Transverse colon (tissue), 4 donors: ENCODE measurements at regions of chr15 and their contacts with region 1.

Region 1: GRCh38 chr15:31311735-31312619 is 14.7 kb upstream of the KLF13 start:
- DNase-seq: no peak
- H3K4me3 ChIP-seq: no peak overlapping the region
- H3K27ac ChIP-seq: no peak overlapping the region
- H3K4me1 ChIP-seq: no peaks in the 10 kb centered on the region
- H3K27me3 ChIP-seq: peaks cover 4% of the 10 kb centered on the region
- CTCF ChIP-seq: no peak
- EP300 ChIP-seq: no peak
- POLR2A ChIP-seq: no peak

Region 2: GRCh38 chr15:31200735-31201151 is 111.2 kb before region 1 on chr15:
- in situ Hi-C with region 1: loop called in 2 of 4 experiments (anchors 10 to 25 kb)
- intact Hi-C with region 1: no loop called
- DNase-seq: peak; percentile 72
- H3K4me3 ChIP-seq: no peak overlapping the region
- H3K27ac ChIP-seq: no peak overlapping the region
- H3K4me1 ChIP-seq: peaks cover 0 to 7% (median 0%) of the 10 kb centered on the region in 4 donors
- H3K27me3 ChIP-seq: no peaks in the 10 kb centered on the region
- CTCF ChIP-seq: peak; percentile 28 to 70 (median 48)
- EP300 ChIP-seq: no peak
- POLR2A ChIP-seq: no peak

Region 3: GRCh38 chr15:31251165-31251564 is 60.8 kb before region 1 on chr15:
- in situ Hi-C with region 1: no loop called
- intact Hi-C with region 1: loop called (anchors 2 kb)
- DNase-seq: no peak
- H3K4me3 ChIP-seq: no peak overlapping the region
- H3K27ac ChIP-seq: no peak overlapping the region
- H3K4me1 ChIP-seq: peaks cover 4 to 26% (median 17%) of the 10 kb centered on the region in 4 donors
- H3K27me3 ChIP-seq: no peaks in the 10 kb centered on the region
- CTCF ChIP-seq: no peak
- EP300 ChIP-seq: no peak
- POLR2A ChIP-seq: no peak

Region 4: DNA sequence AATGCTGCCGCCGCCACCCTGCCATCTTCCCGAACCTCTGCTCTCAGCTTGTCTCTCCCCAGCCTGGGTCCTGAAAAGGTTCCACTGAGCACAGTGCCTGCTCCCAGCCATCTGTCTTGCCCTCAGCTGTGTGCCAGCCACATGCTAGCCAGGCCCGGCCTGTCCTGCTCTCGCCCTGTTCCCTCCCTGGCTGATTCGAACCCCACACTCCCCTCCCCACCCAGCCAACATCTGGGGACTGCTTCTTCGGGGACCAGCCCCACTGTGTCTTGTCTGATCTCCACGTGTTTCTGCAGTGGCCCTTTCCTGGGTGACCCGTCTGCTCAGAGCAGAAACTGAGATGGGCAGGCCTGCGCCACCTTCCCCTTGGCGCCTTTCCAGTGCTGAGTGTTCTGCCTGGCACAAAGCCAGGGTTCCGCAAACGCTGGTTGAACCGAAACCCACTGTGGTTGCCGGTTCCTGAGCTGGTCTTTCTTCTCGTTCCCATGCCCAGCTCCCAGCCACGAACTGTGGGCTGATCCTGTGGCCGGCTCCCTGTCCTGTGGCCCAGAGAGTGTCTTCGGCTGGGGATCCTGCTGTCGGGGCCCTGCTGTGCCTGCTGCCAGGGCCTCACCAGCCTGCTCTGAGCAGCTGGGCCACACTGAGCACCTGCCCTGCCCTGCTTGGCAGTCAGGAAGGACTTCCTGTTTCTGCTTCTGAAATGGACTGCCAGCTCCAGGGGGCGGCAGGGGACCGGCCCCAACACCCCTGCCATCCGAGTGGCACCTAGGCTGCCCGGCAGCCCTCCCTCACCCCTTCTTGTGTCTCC is 48.0 kb before region 1 on chr15:
- in situ Hi-C with region 1: no loop called
- intact Hi-C with region 1: no loop called
- DNase-seq: peak; percentile 91
- H3K4me3 ChIP-seq: no peak overlapping the region
- H3K27ac ChIP-seq: peak overlapping the region; percentile 73 to 90 (median 85)
- H3K4me1 ChIP-seq: peaks cover 27 to 62% (median 40%) of the 10 kb centered on the region in 4 donors
- H3K27me3 ChIP-seq: no peaks in the 10 kb centered on the region
- CTCF ChIP-seq: no peak
- EP300 ChIP-seq: no peak
- POLR2A ChIP-seq: peak; percentile 29

Region 5: DNA sequence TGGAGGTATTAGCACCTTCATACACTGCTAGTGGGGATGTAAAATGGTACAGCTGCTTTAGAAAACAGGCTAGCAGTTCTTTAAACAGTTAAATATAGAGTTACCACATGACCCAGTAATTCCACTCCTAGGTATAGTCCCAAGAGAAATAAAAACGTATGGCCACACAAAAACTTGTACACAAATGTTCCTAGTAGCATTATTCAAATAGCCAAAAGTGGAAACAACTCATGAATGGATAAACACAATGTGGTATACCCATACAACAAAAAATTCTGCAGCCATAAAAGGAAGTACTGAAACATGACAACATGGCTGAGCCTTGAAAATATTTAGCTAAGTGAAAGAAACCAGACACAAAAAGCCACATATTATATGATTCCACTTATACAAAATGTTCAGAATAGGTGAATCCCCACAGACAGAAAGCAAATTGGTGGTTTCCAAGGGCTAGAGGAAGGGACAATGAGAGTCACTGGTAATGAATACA is 26.2 kb before region 1 on chr15:
- in situ Hi-C with region 1: no loop called
- intact Hi-C with region 1: loop called (anchors 1 kb)
- DNase-seq: no peak
- H3K4me3 ChIP-seq: no peak overlapping the region
- H3K27ac ChIP-seq: no peak overlapping the region
- H3K4me1 ChIP-seq: no peaks in the 10 kb centered on the region
- H3K27me3 ChIP-seq: no peaks in the 10 kb centered on the region
- CTCF ChIP-seq: no peak
- EP300 ChIP-seq: no peak
- POLR2A ChIP-seq: no peak